ENCODE measurements at regions of chr1 and their contacts with region 1.

Region 1: GRCh38 chr1:1122078-1122811 is 6.4 kb upstream of the C1orf159 start:
- DNase-seq: peak; percentile 57
- H3K4me3 ChIP-seq: peak overlapping the region in 1 of 3 experiments; percentile 6
- H3K27ac ChIP-seq: no peak overlapping the region
- H3K4me1 ChIP-seq: no peaks in the 10 kb centered on the region
- H3K27me3 ChIP-seq: peaks cover 0 to 2% of the 10 kb centered on the region in 2 experiments
- CTCF ChIP-seq: peak; percentile 80 to 98
- POLR2A ChIP-seq: no peak

Region 2: GRCh38 chr1:1157426-1157913 is 35.2 kb after region 1 on chr1:
- CTCF ChIA-PET with region 1: interaction called, 6 read pairs
- POLR2A ChIA-PET with region 1: no interaction called
- dilution Hi-C with region 1: no loop called
- intact Hi-C with region 1: loop called (anchors 1 kb)
- DNase-seq: peak; percentile 70
- H3K4me3 ChIP-seq: peak overlapping the region in 2 of 3 experiments; percentile 1 to 46
- H3K27ac ChIP-seq: peak overlapping the region; percentile 49
- H3K4me1 ChIP-seq: peaks cover 14% of the 10 kb centered on the region
- H3K27me3 ChIP-seq: no peaks in the 10 kb centered on the region
- CTCF ChIP-seq: no peak
- POLR2A ChIP-seq: peak; percentile 62

Region 3: DNA sequence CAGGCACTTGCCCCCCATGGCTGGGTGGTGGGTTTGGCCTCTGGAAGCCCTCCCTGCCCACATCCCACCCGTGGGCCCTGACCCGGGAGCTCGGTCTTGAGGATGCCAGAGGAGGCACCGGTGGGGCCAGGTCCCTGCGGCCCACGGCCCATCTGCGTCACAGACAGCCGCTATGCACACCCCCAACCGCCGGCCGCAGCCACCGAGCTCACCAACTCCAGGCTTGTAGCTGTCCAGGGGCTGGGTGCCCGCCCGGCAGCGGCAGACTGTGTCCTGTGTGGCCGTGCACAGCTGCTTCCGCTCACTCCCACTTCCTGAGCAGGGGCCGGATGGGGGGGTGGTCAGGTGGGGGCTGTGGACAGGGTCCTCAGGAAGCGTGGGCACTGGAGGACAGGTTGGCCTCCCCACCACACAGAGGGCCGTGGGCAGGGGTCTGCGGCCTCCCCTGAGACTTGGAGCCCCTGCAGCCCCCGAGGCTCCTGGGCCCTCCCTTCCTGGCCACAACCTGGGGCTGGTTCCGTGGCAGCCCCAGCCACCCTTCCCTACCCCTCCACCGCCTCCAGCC is 90.6 kb after region 1 on chr1:
- CTCF ChIA-PET with region 1: interaction called, 10 read pairs
- POLR2A ChIA-PET with region 1: no interaction called
- dilution Hi-C with region 1: no loop called
- intact Hi-C with region 1: loop called (anchors 2 kb)
- DNase-seq: peak; percentile 39
- H3K4me3 ChIP-seq: no peak overlapping the region
- H3K27ac ChIP-seq: no peak overlapping the region
- H3K4me1 ChIP-seq: no peaks in the 10 kb centered on the region
- H3K27me3 ChIP-seq: no peaks in the 10 kb centered on the region
- CTCF ChIP-seq: no peak
- POLR2A ChIP-seq: no peak

Region 4: DNA sequence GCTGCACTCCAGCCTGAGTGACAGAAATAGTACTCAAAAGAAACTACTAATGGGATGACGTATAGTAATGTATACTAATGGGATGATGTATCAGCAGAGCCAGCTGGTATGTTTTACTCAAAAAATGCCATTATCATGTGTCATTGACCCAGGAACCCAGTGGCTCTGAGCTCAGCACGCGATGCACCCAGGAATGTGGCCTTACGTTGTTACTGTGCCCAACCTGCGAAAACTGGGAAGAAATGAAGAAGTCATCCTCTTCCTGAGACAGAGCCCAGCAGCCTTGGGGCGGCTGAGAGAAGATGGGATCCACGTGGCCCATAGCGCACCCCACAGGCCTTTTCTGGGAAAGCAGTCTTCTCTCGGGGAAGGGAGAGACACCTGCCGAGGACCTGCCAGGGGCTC is 142.6 kb after region 1 on chr1:
- CTCF ChIA-PET with region 1: interaction called, 25 read pairs
- POLR2A ChIA-PET with region 1: no interaction called
- dilution Hi-C with region 1: no loop called
- intact Hi-C with region 1: loop called (anchors 1 kb)
- DNase-seq: peak; percentile 28
- H3K4me3 ChIP-seq: no peak overlapping the region
- H3K27ac ChIP-seq: peak overlapping the region; percentile 85
- H3K4me1 ChIP-seq: peaks cover 24% of the 10 kb centered on the region
- H3K27me3 ChIP-seq: no peaks in the 10 kb centered on the region
- CTCF ChIP-seq: peak; percentile 31 to 39
- POLR2A ChIP-seq: no peak

Region 5: DNA sequence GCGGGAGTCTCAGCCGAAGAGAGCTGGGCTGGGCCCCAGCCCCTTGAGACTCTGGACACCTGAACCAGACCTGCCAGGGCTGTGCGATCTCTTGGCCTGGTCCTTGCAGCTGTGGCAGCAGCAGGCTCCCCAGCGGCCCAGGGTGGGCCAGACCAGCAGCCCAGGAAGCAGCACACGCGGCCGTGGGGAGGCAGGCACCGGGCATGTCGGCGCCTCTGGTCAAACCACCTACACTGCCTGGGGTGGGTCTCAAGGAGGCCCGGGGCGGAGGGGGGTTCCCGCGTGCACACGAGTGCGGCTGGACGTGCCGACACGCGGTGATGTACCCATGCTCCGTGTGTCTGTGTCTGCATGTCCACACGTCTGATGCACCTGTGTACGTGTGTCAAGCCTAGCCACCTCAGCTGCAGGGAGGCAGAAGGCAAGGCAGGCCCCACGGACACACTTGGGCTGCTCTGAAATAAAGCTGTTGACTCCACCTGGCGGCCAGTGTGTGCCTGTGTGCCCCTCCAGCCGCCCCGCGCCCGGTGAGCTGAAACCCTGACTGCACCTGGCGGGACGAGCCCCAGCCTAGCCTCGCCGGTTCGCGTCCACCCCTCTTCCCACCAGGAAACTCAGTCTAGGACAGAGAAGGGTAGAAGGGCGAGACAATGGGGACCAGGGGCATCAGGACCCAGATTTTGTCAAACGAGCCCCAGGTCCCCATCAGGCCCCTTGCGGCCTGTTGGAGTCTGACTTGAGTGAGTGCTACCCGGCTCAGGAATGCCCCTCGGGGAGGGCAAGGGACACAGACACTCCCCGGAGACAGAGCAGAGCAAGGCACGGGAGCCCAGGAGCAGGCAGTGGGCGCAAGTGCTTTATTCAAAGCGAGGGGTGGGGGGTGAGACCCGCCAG is 169.6 kb after region 1 on chr1:
- CTCF ChIA-PET with region 1: interaction called, 286 read pairs
- POLR2A ChIA-PET with region 1: interaction called, 4 read pairs
- dilution Hi-C with region 1: no loop called
- intact Hi-C with region 1: loop called (anchors 1 kb)
- DNase-seq: peak; percentile 50
- H3K4me3 ChIP-seq: no peak overlapping the region
- H3K27ac ChIP-seq: no peak overlapping the region
- H3K4me1 ChIP-seq: no peaks in the 10 kb centered on the region
- H3K27me3 ChIP-seq: no peaks in the 10 kb centered on the region
- CTCF ChIP-seq: peak; percentile 73 to 83
- POLR2A ChIP-seq: no peak

Region 6: DNA sequence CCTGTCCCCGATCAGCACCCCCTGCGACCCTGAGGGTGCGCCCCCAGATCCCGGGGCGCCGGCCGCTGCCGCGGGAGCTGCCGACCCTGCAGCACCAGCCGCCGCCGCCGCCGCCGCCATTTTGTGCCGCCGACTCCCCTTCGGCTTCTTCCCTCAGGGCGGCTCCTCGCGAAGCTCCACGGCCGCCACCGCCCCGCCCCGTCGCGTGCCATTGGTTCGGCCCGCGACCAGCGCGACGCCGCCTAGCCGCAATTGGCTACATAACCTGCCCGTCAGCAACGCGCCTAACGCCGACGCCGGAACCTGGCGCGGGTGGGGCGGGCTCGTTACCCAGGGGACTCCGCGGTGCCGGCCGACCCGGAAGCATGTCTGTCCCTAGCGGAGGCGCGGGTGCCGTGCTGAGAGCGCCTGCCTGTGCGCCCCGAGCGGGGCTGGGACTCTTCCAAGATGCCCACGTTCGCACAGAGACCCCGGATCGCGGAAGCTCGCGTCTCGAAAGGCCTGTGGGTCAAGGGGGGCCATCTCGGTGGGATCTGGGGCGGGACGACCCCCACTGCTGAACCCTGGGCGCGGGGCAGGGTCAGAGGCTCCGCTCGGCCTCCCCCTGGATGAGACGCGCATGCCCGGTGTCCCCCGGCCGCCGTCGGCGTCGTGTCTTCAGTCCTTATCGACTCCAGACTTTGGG is 277.1 kb after region 1 on chr1 and contains the start of gene CCNL2:
- CTCF ChIA-PET with region 1: no interaction called
- POLR2A ChIA-PET with region 1: no interaction called
- dilution Hi-C with region 1: no loop called
- intact Hi-C with region 1: no loop called
- DNase-seq: peak; percentile 99
- H3K4me3 ChIP-seq: peak within 1 kb of the TSS; percentile 80 to 92 (median 90)
- H3K27ac ChIP-seq: peak within 1 kb of the TSS; percentile 54
- H3K4me1 ChIP-seq: peaks cover 22% of the 10 kb centered on the region
- H3K27me3 ChIP-seq: no peaks in the 10 kb centered on the region
- CTCF ChIP-seq: peak; percentile 63 to 78
- POLR2A ChIP-seq: peak; percentile 58
- total RNA-seq, gene CCNL2: 182 and 188 TPM in 2 replicates

Measured in endothelial cell of umbilical vein (primary cell).